Activated CD8-positive, alpha-beta memory T cell treated with anti-CD3 and anti-CD28 coated beads, Interleukin-2, amount 10 ng/mL, durations not matched to agents 7 days and 5 days (primary cell): ENCODE measurements at regions of chr15 and their contacts with region 1.

Region 1: DNA sequence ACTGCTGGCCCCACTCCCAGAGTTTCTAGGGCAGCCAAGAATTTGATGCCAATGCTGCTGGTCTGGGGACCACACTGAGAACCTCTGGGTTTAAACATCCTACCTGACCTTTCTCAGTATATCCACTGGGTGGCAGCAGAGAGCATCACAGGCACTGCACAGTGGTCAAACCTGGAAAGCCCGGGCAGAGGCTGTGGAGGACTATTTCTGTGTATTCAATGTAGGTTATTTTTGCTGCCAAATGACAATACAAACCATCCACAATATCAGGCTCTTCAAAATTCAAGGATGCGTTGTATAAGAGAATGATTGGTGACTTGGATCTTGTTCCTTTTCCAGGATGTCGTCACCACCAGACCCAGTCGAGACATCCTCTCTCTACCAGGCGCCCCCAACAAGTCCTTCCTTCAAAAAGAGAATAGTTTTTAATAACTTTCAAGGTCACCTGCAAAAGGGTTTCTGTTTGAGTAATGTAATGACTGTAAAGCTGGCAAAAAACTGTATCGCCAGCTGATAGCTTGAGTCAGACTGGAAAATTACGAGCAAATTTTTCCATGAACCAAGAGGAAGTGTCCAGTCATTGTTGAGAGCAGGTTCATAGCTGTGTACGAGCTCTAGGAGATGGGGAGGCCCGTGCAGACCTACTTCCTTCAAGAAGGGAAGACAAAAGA is 30.5 kb upstream of the MYZAP start:
- DNase-seq: peak; percentile 75
- ATAC-seq: peak; percentile 83
- H3K4me3 Mint-ChIP-seq: no peak overlapping the region
- H3K27ac Mint-ChIP-seq: no peak overlapping the region
- H3K4me1 Mint-ChIP-seq: peaks cover 25% of the 10 kb centered on the region
- H3K27me3 Mint-ChIP-seq: peaks cover 27% of the 10 kb centered on the region

Region 2: DNA sequence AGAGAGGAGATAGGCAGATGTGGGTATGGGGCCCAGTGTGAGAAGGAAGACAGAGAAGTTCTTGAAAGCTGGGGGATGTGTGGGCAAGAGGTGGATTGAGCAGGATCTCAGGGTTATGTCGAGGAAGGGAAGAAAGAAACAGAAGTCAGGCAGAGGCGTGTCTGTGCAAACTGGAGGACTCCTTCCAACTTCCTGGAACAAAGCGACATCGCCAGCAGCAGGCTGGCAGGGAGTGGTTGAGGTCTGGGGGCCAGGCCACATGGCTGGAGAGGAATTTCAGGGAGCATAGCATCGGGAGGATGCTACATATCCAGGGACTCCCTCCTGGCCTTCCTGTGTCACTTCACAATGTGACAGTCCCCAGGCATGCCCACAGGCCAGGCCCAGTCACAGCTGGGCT is 12.3 kb before region 1 on chr15:
- CTCF ChIA-PET with region 1: interaction called, 10 read pairs
- DNase-seq: no peak
- ATAC-seq: no peak
- H3K4me3 Mint-ChIP-seq: no peak overlapping the region
- H3K27ac Mint-ChIP-seq: no peak overlapping the region
- H3K4me1 Mint-ChIP-seq: no peaks in the 10 kb centered on the region
- H3K27me3 Mint-ChIP-seq: peaks cover 11% of the 10 kb centered on the region